ENCODE measurements at regions of chr2 and their contacts with region 1.

Region 1: DNA sequence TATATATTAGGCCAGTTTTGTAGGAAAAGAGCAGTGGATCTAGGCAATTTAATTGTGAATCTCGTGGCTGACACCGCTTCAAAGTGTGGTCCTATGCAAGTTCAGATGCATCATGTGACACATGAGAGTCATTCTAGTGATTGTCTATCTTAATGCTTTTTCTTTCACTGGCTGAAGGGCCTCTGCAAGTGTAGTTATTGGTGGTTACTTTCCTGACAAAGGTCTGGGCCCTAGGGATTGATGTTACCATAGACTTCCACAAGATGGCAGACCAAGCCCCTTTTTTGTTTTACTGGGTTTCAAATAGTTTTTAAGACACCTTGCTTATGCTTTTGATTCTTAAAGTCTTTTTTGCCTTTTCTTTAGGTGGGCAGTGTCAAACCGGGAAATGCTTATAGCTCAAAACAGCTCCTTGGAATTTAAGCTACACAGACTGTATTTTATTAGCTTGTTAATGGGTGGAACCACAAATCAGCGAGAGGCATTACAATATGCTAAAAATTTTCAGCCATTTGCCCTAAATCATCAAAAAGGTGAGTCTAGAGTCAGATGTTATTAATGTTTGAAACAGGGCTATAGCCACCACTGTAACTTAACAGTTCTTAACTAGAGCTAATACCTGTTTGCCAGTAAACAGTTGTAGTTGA is 25.9 kb downstream of the CD8A start:
- DNase-seq: peak in 6 of 9 experiments; percentile 47 to 84 (median 54)
- ATAC-seq: peak; percentile 84
- H3K4me3 ChIP-seq: no peak overlapping the region
- H3K4me3 Mint-ChIP-seq: no peak overlapping the region
- H3K27ac ChIP-seq: peak overlapping the region in 1 of 2 experiments; percentile 43
- H3K27ac Mint-ChIP-seq: peak overlapping the region; percentile 84
- H3K4me1 ChIP-seq: peaks cover 9% of the 10 kb centered on the region
- H3K4me1 Mint-ChIP-seq: peaks cover 30% of the 10 kb centered on the region
- H3K27me3 ChIP-seq: no peaks in the 10 kb centered on the region
- H3K27me3 Mint-ChIP-seq: no peaks in the 10 kb centered on the region
- CTCF ChIP-seq: peak; percentile 78

Region 2: GRCh38 chr2:86623651-86624541 is 140.9 kb before region 1 on chr2 and contains the start of gene RNF103:
- CTCF ChIA-PET with region 1: no interaction called
- POLR2A ChIA-PET with region 1: no interaction called
- intact Hi-C with region 1: loop called in 1 of 2 experiments (anchors 5 kb)
- DNase-seq: peak; percentile 80 to 97 (median 95)
- ATAC-seq: peak; percentile 87
- H3K4me3 ChIP-seq: peak within 1 kb of the TSS; percentile 64 to 76
- H3K4me3 Mint-ChIP-seq: peak within 1 kb of the TSS; percentile 95
- H3K27ac ChIP-seq: peak within 1 kb of the TSS; percentile 91 to 93
- H3K27ac Mint-ChIP-seq: peak within 1 kb of the TSS; percentile 94
- H3K4me1 ChIP-seq: peaks cover 27% of the 10 kb centered on the region
- H3K4me1 Mint-ChIP-seq: peaks cover 37% of the 10 kb centered on the region
- H3K27me3 ChIP-seq: no peaks in the 10 kb centered on the region
- H3K27me3 Mint-ChIP-seq: no peaks in the 10 kb centered on the region
- CTCF ChIP-seq: no peak
- total RNA-seq, gene RNF103: 118 to 120 TPM

Region 3: DNA sequence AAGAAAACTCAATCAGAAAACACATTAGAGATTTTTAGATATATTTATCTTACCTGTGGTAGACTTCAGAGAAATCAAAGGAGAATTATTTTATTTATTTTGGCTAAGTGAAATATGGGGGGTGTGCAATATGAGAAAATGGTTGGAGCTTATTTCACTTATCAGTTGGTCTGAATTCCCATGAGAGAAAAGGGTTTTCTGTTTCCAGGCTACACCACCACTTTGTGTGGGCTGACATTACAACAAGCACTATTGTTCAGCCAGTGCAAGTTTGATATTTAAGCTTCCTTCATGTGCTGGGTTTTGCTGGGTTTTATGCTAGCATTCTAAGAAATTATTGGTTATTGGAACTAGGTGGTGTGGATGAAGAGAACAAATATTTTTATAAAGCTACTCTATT is 11.2 kb before region 1 on chr2:
- CTCF ChIA-PET with region 1: interaction called, 26 read pairs
- POLR2A ChIA-PET with region 1: interaction called, 3 read pairs
- intact Hi-C with region 1: no loop called
- DNase-seq: no peak
- ATAC-seq: no peak
- H3K4me3 ChIP-seq: no peak overlapping the region
- H3K4me3 Mint-ChIP-seq: no peak overlapping the region
- H3K27ac ChIP-seq: no peak overlapping the region
- H3K27ac Mint-ChIP-seq: no peak overlapping the region
- H3K4me1 ChIP-seq: no peaks in the 10 kb centered on the region
- H3K4me1 Mint-ChIP-seq: peaks cover 45% of the 10 kb centered on the region
- H3K27me3 ChIP-seq: no peaks in the 10 kb centered on the region
- H3K27me3 Mint-ChIP-seq: no peaks in the 10 kb centered on the region
- CTCF ChIP-seq: no peak

Region 4: GRCh38 chr2:86783615-86784339 is 19.0 kb after region 1 on chr2:
- CTCF ChIA-PET with region 1: interaction called, 169 read pairs
- POLR2A ChIA-PET with region 1: interaction called, 17 read pairs
- intact Hi-C with region 1: loop called (anchors 1 kb)
- DNase-seq: peak in 4 of 9 experiments; percentile 45 to 79 (median 54)
- ATAC-seq: peak; percentile 8
- H3K4me3 ChIP-seq: no peak overlapping the region
- H3K4me3 Mint-ChIP-seq: peak overlapping the region; percentile 48
- H3K27ac ChIP-seq: peak overlapping the region; percentile 93 to 99
- H3K27ac Mint-ChIP-seq: peak overlapping the region; percentile 99
- H3K4me1 ChIP-seq: peaks cover 74% of the 10 kb centered on the region
- H3K4me1 Mint-ChIP-seq: peaks cover 74% of the 10 kb centered on the region
- H3K27me3 ChIP-seq: no peaks in the 10 kb centered on the region
- H3K27me3 Mint-ChIP-seq: no peaks in the 10 kb centered on the region
- CTCF ChIP-seq: no peak

Region 5: DNA sequence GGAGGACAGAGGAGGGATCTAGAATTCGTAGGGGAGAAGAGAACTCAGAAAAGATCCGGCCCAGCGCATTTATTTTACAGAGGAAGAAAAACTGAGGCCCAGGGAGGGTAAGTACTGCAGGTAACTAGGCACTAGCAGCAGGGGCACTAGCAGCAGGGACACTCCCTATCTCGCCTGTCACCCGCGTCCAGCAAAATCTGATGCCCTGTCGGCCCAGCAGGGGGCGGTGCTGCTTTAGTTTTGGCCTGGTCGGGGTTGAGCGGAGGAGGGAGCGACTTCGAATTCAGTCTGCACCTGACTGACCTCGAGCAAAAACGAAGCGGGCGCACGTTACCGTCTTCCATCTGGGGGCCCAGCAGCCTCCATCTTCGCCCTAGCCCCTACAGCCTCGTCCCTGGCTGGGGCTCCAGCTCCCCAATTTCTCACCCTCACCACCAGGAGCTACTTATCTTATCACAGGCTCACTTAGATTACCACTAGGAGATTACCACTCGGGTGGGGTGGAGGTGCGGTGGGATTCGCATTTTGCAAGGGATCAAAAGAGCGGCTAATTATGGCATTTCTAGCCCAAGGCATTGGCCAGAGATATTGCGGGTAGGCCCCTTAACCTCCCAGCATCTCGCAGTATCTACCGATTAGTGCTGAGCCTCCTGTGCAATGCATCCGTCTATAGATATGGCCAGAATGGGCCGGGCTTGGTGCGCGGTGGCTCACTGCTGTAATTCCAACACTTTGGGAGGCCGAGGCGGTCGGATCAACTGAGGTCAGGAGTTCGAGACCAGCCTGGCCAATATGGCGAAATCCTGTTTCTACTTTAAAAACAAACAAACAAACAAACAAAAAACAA is 43.8 kb after region 1 on chr2:
- CTCF ChIA-PET with region 1: interaction called, 196 read pairs
- POLR2A ChIA-PET with region 1: interaction called, 71 read pairs
- intact Hi-C with region 1: loop called (anchors 1 kb)
- DNase-seq: peak; percentile 93 to 100 (median 97)
- ATAC-seq: peak; percentile 69
- H3K4me3 ChIP-seq: peak overlapping the region; percentile 77 to 78
- H3K4me3 Mint-ChIP-seq: peak overlapping the region; percentile 98
- H3K27ac ChIP-seq: peak overlapping the region; percentile 75 to 78
- H3K27ac Mint-ChIP-seq: peak overlapping the region; percentile 99
- H3K4me1 ChIP-seq: peaks cover 51% of the 10 kb centered on the region
- H3K4me1 Mint-ChIP-seq: peaks cover 71% of the 10 kb centered on the region
- H3K27me3 ChIP-seq: no peaks in the 10 kb centered on the region
- H3K27me3 Mint-ChIP-seq: no peaks in the 10 kb centered on the region
- CTCF ChIP-seq: peak; percentile 79

Region 6: GRCh38 chr2:86833315-86833714 is 68.5 kb after region 1 on chr2:
- CTCF ChIA-PET with region 1: no interaction called
- POLR2A ChIA-PET with region 1: no interaction called
- intact Hi-C with region 1: no loop called
- DNase-seq: peak in 1 of 9 experiments; percentile 52
- ATAC-seq: no peak
- H3K4me3 ChIP-seq: no peak overlapping the region
- H3K4me3 Mint-ChIP-seq: peak overlapping the region; percentile 68
- H3K27ac ChIP-seq: peak overlapping the region in 1 of 2 experiments; percentile 22
- H3K27ac Mint-ChIP-seq: peak overlapping the region; percentile 98
- H3K4me1 ChIP-seq: peaks cover 90% of the 10 kb centered on the region
- H3K4me1 Mint-ChIP-seq: peaks cover 78% of the 10 kb centered on the region
- H3K27me3 ChIP-seq: no peaks in the 10 kb centered on the region
- H3K27me3 Mint-ChIP-seq: no peaks in the 10 kb centered on the region
- CTCF ChIP-seq: no peak

Measured in CD8-positive, alpha-beta T cell (primary cell).